H1 (cell line): ENCODE measurements at regions of chr14 and their contacts with region 1.

Region 1: GRCh38 chr14:20343092-20343861 is at the start of gene PARP2:
- DNase-seq: peak; percentile 98 to 100
- H3K4me3 ChIP-seq: peak within 1 kb of the TSS; percentile 86 to 97 (median 88)
- H3K27ac ChIP-seq: peak within 1 kb of the TSS; percentile 83
- H3K4me1 ChIP-seq: no peaks in the 10 kb centered on the region; a peak in 1 of 7 replicates
- H3K27me3 ChIP-seq: no peaks in the 10 kb centered on the region
- CTCF ChIP-seq: no peak
- EP300 ChIP-seq: no peak; a peak in 1 of 3 replicates
- POLR2A ChIP-seq: peak; percentile 97 to 100
- RAD21 ChIP-seq: 0 out of 4 replicates have a peak, but pooled peaks of 1 of the 2 experiments have one; percentile 0
- total RNA-seq, gene PARP2: 41.7 and 42.9 TPM in 2 replicates

Region 2: GRCh38 chr14:20247646-20248246 is 95.5 kb before region 1 on chr14:
- CTCF ChIA-PET with region 1: no interaction called
- POLR2A ChIA-PET with region 1: no interaction called
- DNase-seq: no peak
- H3K4me3 ChIP-seq: no peak overlapping the region
- H3K27ac ChIP-seq: no peak overlapping the region
- H3K4me1 ChIP-seq: no peaks in the 10 kb centered on the region
- H3K27me3 ChIP-seq: no peaks in the 10 kb centered on the region
- CTCF ChIP-seq: peak in 2 of 3 experiments; percentile 13 to 50; a peak in 2 of 4 replicates
- EP300 ChIP-seq: no peak
- POLR2A ChIP-seq: no peak
- RAD21 ChIP-seq: peak; percentile 54 to 60

Region 3: DNA sequence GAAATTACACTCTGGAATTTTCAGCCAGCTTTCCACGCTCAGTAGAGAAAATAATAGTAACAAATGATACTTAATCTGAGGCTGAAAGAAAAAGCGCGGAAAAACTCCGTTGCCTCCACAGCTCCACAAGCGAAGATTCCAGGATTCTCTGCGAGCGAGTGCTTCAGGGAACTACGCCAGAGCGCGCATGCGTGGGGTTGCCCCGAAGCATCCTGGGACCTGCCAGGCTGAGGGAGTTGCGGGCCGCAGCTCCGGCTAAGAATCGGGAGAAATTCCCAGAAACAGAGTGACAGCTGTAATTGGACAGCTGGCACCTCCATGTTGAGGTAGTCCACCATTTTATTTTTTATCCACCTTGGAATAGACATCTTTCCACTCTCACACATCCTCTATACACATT is 25.6 kb before region 1 on chr14:
- CTCF ChIA-PET with region 1: no interaction called
- POLR2A ChIA-PET with region 1: interaction called, 26 read pairs
- DNase-seq: no peak
- H3K4me3 ChIP-seq: no peak overlapping the region
- H3K27ac ChIP-seq: no peak overlapping the region
- H3K4me1 ChIP-seq: no peaks in the 10 kb centered on the region
- H3K27me3 ChIP-seq: no peaks in the 10 kb centered on the region; a peak in 1 of 7 replicates
- CTCF ChIP-seq: no peak
- EP300 ChIP-seq: no peak
- POLR2A ChIP-seq: peak; percentile 38 to 61
- RAD21 ChIP-seq: no peak

Region 4: GRCh38 chr14:20356422-20356821 is 13.1 kb after region 1 on chr14:
- CTCF ChIA-PET with region 1: interaction called, 4 read pairs
- POLR2A ChIA-PET with region 1: interaction called, 51 read pairs
- DNase-seq: peak in 1 of 2 experiments; percentile 8
- H3K4me3 ChIP-seq: no peak overlapping the region
- H3K27ac ChIP-seq: no peak overlapping the region
- H3K4me1 ChIP-seq: no peaks in the 10 kb centered on the region
- H3K27me3 ChIP-seq: no peaks in the 10 kb centered on the region
- CTCF ChIP-seq: no peak
- EP300 ChIP-seq: no peak
- POLR2A ChIP-seq: no peak
- RAD21 ChIP-seq: no peak

Region 5: DNA sequence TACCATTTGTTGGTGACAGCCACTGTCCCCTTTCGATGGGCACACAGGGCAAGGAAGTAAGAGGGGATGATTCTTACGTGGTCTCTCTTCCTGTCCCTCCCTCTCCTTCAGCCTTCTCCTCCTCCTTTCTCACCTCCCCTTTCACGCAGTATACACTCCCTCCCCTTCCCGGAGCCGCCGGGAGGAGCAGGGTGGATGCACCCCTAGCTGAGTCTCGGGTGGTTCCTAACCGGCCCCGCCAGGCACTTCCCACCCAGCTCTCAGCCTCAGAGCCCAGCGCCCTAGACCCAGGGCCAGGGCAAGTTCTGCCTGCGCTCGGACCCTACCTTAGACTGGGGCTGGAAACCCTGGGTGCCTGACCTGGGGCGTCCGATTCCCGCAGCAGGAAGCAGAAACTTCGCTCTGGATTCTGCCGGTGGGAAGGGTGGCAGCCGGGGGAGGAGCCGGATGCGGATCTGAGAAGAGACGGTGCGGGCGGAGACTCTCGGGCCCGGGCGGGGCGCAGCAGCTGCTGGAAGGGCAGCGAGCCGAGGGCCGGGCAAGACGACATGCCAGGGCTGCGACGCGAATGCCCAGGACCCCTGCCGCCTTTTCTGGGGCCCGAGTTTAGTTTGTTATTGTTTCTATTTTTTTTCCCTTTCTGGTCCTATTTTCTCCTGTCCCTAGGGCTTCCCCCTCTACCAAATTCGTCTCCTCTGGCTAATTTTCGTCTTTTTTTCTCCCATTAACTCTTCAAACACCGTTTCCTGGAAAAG is 69.9 kb after region 1 on chr14 and contains the start of gene TEP1:
- CTCF ChIA-PET with region 1: interaction called, 3 read pairs
- POLR2A ChIA-PET with region 1: interaction called, 19 read pairs
- DNase-seq: peak; percentile 31 to 83
- H3K4me3 ChIP-seq: peak within 1 kb of the TSS; percentile 91 to 97 (median 92)
- H3K27ac ChIP-seq: no peak within 1 kb of the TSS; the same call in 1 of the 2 replicates
- H3K4me1 ChIP-seq: peaks cover 0 to 5% (median 3%) of the 10 kb centered on the region in 4 experiments; a peak in 3 of 7 replicates
- H3K27me3 ChIP-seq: no peaks in the 10 kb centered on the region
- CTCF ChIP-seq: no peak
- EP300 ChIP-seq: no peak
- POLR2A ChIP-seq: peak in 1 of 2 experiments; percentile 57; a peak in 1 of 3 replicates
- RAD21 ChIP-seq: no peak
- total RNA-seq, gene TEP1: 9.6 and 10.7 TPM in 2 replicates

Region 6: GRCh38 chr14:20434701-20435581 is 91.7 kb after region 1 on chr14:
- CTCF ChIA-PET with region 1: no interaction called
- POLR2A ChIA-PET with region 1: no interaction called
- DNase-seq: peak in 1 of 2 experiments; percentile 61
- H3K4me3 ChIP-seq: peak overlapping the region; percentile 21 to 61 (median 32); a peak in 7 of 8 replicates
- H3K27ac ChIP-seq: no peak overlapping the region
- H3K4me1 ChIP-seq: peaks cover 4 to 10% (median 9%) of the 10 kb centered on the region in 4 experiments; a peak in 6 of 7 replicates
- H3K27me3 ChIP-seq: peaks cover 0 to 20% (median 14%) of the 10 kb centered on the region in 4 experiments; a peak in 5 of 7 replicates
- CTCF ChIP-seq: no peak
- EP300 ChIP-seq: no peak
- POLR2A ChIP-seq: no peak
- RAD21 ChIP-seq: no peak

Region 7: DNA sequence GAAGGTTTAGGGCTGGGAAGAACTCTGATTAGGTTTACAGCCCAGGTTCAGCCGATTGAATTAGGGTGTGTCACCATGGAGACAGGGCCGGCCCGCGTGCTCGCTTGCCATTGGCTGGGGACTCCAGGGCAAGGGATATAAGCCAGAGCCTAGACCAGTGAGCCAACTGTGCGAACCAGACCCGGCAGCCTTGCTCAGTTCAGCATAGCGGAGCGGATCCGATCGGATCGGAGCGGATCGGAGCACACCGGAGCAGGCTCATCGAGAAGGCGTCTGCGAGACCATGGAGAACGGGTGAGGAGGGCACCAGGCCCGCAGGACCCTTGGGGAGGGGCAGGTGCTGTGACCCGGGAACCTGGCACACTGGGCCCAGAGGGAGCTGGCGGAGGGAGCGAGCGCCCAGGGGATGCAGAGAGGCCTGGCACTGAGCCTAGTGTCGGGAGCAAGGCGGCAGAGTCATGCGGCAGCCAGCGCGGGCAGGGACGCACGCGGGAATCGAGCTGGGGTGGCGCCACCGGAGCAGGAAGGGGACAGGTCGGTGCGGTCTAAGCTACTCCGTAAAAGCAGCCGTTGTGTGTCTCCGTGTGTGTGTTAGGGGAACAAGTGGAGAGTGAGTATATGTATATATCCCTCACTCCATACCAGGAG is 126.1 kb after region 1 on chr14 and contains the start of gene PNP:
- CTCF ChIA-PET with region 1: no interaction called
- POLR2A ChIA-PET with region 1: interaction called, 18 read pairs
- DNase-seq: peak; percentile 78 to 96
- H3K4me3 ChIP-seq: peak within 1 kb of the TSS; percentile 85 to 97 (median 90)
- H3K27ac ChIP-seq: peak within 1 kb of the TSS; percentile 63
- H3K4me1 ChIP-seq: peaks cover 0 to 5% (median 2%) of the 10 kb centered on the region in 4 experiments; a peak in 3 of 7 replicates
- H3K27me3 ChIP-seq: no peaks in the 10 kb centered on the region; a peak in 1 of 7 replicates
- CTCF ChIP-seq: no peak
- EP300 ChIP-seq: no peak
- POLR2A ChIP-seq: peak; percentile 99 to 100
- RAD21 ChIP-seq: no peak; a peak in 1 of 4 replicates
- total RNA-seq, gene PNP: 108 and 110 TPM in 2 replicates